Heart left ventricle (tissue), 16 donors: ENCODE measurements at regions of chr13 and their contacts with region 1.

Region 1: DNA sequence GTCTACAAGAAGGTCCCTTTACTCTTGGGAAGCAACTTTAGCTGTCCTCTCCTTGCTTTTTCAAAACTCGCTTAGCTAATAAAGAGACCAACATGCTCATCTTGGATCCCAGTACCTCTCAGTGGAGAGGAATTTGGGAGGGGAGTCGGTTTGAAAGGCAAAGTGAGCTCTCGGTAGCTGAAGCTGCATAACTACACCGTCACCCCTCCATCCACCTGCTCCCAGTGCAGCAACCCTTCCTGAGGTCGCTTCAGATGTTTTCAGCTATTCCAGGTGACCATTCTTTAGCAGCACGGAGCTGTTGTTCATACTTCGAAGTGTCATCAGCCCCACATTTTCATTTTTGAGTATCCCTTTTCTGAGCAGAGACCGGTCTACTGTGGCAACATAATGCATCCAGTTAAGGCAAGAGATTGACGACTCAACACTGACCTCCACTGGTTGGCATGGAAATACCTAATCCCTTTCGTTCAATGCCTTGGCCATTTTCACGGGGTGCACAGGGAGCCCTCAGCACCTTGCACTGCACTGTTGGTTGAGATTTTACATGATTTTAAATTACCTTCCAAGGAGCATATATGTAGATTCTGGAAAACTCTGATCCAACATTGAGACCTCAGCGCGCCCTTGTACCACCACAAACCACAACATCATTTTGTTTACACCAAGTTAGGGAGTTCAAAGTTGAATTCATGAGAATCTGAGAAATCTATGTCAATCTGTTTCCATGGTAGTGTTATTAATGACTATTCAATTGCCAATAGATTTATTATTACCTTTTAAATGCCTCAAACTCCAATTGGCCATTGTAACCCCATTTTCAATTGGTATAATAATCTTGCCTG is 42.2 kb downstream of the DLEU7 start:
- DNase-seq: peak in 4 of 5 donors; percentile 41 to 73 (median 58)
- ATAC-seq: peak; percentile 87 to 96 (median 94)
- H3K4me3 ChIP-seq: peak overlapping the region in 4 of 12 donors; percentile 12 to 22 (median 16)
- H3K27ac ChIP-seq: peak overlapping the region in 7 of 12 donors; percentile 0 to 72 (median 32)
- H3K4me1 ChIP-seq: peaks cover 0 to 32% (median 20%) of the 10 kb centered on the region in 12 donors
- H3K27me3 ChIP-seq: no peaks in the 10 kb centered on the region
- CTCF ChIP-seq: peak; percentile 66 to 84 (median 78)
- POLR2A ChIP-seq: no peak

Region 2: DNA sequence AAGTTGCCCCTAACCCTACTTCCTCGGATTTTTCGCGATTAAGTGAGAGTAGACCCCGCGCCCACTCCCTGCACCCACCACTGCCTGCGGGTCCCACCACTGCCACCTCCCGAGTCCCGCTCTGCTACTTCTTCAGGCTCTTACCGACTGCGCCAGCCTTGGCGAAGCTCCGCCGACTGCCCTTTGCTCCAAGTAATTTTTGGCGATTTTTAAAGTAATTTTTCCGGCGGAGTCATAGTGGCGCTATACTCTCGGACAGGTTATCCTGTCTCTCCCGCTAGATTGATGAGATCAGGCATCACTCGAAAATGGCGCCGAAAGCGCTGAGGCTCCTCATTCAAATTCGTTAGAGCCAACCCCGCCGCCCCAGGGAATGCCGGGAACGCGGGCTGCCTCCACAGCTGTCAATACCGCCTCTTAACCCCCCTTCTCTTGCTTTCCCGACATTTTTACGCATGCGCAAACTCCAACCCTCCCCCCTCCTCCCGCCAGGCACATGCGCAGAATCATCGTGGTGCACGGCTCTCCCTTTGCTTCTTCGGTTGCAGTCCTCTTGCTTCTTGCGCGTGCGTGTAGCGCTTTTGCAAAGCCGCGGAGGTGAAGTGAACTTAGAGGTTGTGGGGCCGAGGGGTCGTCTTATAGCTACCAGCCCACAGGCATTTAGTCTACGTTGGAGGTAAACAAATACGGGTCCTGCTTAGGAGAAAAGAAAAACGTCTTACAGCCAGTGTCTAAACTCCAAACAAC is 719.5 kb before region 1 on chr13:
- intact Hi-C with region 1: loop called in 8 of 10 experiments (anchors 2 to 5 kb)
- DNase-seq: peak; percentile 97 to 98 (median 98)
- ATAC-seq: peak; percentile 95 to 97 (median 96)
- H3K4me3 ChIP-seq: peak overlapping the region; percentile 41 to 80 (median 69)
- H3K27ac ChIP-seq: peak overlapping the region in 11 of 12 donors; percentile 67 to 88 (median 78)
- H3K4me1 ChIP-seq: peaks cover 0 to 64% (median 26%) of the 10 kb centered on the region in 12 donors
- H3K27me3 ChIP-seq: no peaks in the 10 kb centered on the region
- CTCF ChIP-seq: peak in 2 of 12 donors; percentile 14 to 21
- POLR2A ChIP-seq: no peak

Region 3: GRCh38 chr13:50376895-50377575 is 424.3 kb before region 1 on chr13:
- intact Hi-C with region 1: loop called in 5 of 10 experiments (anchors 5 to 10 kb)
- DNase-seq: peak in 1 of 5 donors; percentile 30
- ATAC-seq: peak in 2 of 4 donors; percentile 53 to 70
- H3K4me3 ChIP-seq: no peak overlapping the region
- H3K27ac ChIP-seq: no peak overlapping the region
- H3K4me1 ChIP-seq: no peaks in the 10 kb centered on the region
- H3K27me3 ChIP-seq: no peaks in the 10 kb centered on the region
- CTCF ChIP-seq: peak in 8 of 12 donors; percentile 24 to 51 (median 33)
- POLR2A ChIP-seq: no peak

Region 4: GRCh38 chr13:50539791-50540530 is 261.3 kb before region 1 on chr13:
- intact Hi-C with region 1: loop called in 2 of 10 experiments (anchors 5 to 10 kb)
- DNase-seq: no peak
- ATAC-seq: no peak
- H3K4me3 ChIP-seq: no peak overlapping the region
- H3K27ac ChIP-seq: no peak overlapping the region
- H3K4me1 ChIP-seq: peaks cover 0 to 5% (median 0%) of the 10 kb centered on the region in 12 donors
- H3K27me3 ChIP-seq: no peaks in the 10 kb centered on the region
- CTCF ChIP-seq: no peak
- POLR2A ChIP-seq: no peak

Region 5: DNA sequence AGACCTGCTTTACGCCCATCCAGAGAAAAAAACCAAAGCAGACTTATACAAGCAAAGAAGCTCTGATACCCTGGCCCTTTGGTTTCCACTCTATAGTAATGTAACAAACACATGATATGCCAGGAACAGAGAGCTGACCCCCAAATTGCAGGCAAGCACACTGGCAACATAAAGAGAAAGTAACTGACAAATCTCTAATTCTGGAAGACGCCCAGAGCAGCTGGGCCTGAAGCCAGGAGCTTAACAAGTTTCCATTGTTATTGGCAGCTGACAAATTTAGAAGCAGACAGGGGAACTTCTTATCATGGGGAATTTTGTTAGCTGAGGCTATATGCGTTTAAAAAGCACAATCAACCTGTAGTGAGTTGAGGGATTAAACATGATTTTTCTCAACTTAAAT is 115.8 kb before region 1 on chr13:
- intact Hi-C with region 1: loop called in 2 of 10 experiments (anchors 5 to 10 kb)
- DNase-seq: peak; percentile 84 to 89 (median 87)
- ATAC-seq: peak; percentile 78 to 90 (median 82)
- H3K4me3 ChIP-seq: peak overlapping the region in 1 of 12 donors; percentile 9
- H3K27ac ChIP-seq: peak overlapping the region; percentile 28 to 91 (median 78)
- H3K4me1 ChIP-seq: peaks cover 5 to 47% (median 34%) of the 10 kb centered on the region in 12 donors
- H3K27me3 ChIP-seq: no peaks in the 10 kb centered on the region
- CTCF ChIP-seq: no peak
- POLR2A ChIP-seq: no peak

Region 6: GRCh38 chr13:51070005-51070649 is 268.8 kb after region 1 on chr13:
- intact Hi-C with region 1: loop called in 2 of 10 experiments (anchors 5 to 10 kb)
- DNase-seq: peak; percentile 66 to 87 (median 77)
- ATAC-seq: peak; percentile 74 to 87 (median 82)
- H3K4me3 ChIP-seq: no peak overlapping the region
- H3K27ac ChIP-seq: no peak overlapping the region
- H3K4me1 ChIP-seq: peaks cover 0 to 30% (median 8%) of the 10 kb centered on the region in 12 donors
- H3K27me3 ChIP-seq: peaks cover 0 to 1% (median 0%) of the 10 kb centered on the region in 9 donors
- CTCF ChIP-seq: peak; percentile 84 to 97 (median 93)
- POLR2A ChIP-seq: no peak